Activated CD4-positive, alpha-beta memory T cell treated with anti-CD3 and anti-CD28 coated beads for 36 hours (primary cell): ENCODE measurements at regions of chr7 and their contacts with region 1.

Region 1: GRCh38 chr7:37342688-37343471 is 105.8 kb downstream of the ELMO1 start:
- DNase-seq: peak; percentile 85
- H3K4me3 Mint-ChIP-seq: peak overlapping the region; percentile 96
- H3K27ac Mint-ChIP-seq: peak overlapping the region; percentile 94
- H3K4me1 Mint-ChIP-seq: peaks cover 79% of the 10 kb centered on the region
- H3K27me3 Mint-ChIP-seq: no peaks in the 10 kb centered on the region

Region 2: GRCh38 chr7:36389371-36390198 is 953.3 kb before region 1 on chr7 and contains the start of gene ANLN:
- CTCF ChIA-PET with region 1: no interaction called
- POLR2A ChIA-PET with region 1: no interaction called
- intact Hi-C with region 1: loop called (anchors 2 kb)
- DNase-seq: peak; percentile 91
- H3K4me3 Mint-ChIP-seq: peak within 1 kb of the TSS; percentile 93
- H3K27ac Mint-ChIP-seq: peak within 1 kb of the TSS; percentile 88
- H3K4me1 Mint-ChIP-seq: peaks cover 24% of the 10 kb centered on the region
- H3K27me3 Mint-ChIP-seq: no peaks in the 10 kb centered on the region
- total RNA-seq, gene ANLN: 46.6 to 54.7 TPM

Region 3: DNA sequence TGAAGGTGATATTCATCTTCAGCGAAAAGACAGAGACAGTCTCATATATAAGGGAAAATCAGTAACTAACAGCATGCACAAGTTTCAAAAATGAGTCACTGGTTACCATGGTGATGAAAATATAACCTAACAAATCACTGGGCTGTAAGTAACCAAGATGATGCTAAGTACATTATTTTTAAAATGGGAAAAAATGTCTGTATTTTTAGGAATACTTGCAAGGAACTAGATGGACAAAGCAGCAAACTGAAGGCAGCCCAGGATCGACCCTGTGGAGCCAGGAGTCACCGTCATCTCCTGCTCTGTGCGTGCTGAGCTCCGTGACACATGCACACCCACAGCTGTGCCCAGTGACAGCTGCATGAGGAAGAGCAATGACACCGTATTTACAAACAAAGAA is 31.5 kb before region 1 on chr7:
- CTCF ChIA-PET with region 1: no interaction called
- POLR2A ChIA-PET with region 1: interaction called, 3 read pairs
- intact Hi-C with region 1: loop called (anchors 2 kb)
- DNase-seq: peak; percentile 62
- H3K4me3 Mint-ChIP-seq: peak overlapping the region; percentile 1
- H3K27ac Mint-ChIP-seq: peak overlapping the region; percentile 70
- H3K4me1 Mint-ChIP-seq: peaks cover 65% of the 10 kb centered on the region
- H3K27me3 Mint-ChIP-seq: no peaks in the 10 kb centered on the region

Region 4: GRCh38 chr7:37376386-37376785 is 33.5 kb after region 1 on chr7:
- CTCF ChIA-PET with region 1: interaction called, 3 read pairs
- POLR2A ChIA-PET with region 1: no interaction called
- intact Hi-C with region 1: loop called (anchors 1 kb)
- DNase-seq: peak; percentile 80
- H3K4me3 Mint-ChIP-seq: peak overlapping the region; percentile 54
- H3K27ac Mint-ChIP-seq: peak overlapping the region; percentile 95
- H3K4me1 Mint-ChIP-seq: peaks cover 72% of the 10 kb centered on the region
- H3K27me3 Mint-ChIP-seq: no peaks in the 10 kb centered on the region

Region 5: GRCh38 chr7:37395618-37396259 is 52.9 kb after region 1 on chr7:
- CTCF ChIA-PET with region 1: no interaction called
- POLR2A ChIA-PET with region 1: no interaction called
- intact Hi-C with region 1: no loop called
- DNase-seq: no peak
- H3K4me3 Mint-ChIP-seq: no peak overlapping the region
- H3K27ac Mint-ChIP-seq: peak overlapping the region; percentile 85
- H3K4me1 Mint-ChIP-seq: peaks cover 78% of the 10 kb centered on the region
- H3K27me3 Mint-ChIP-seq: no peaks in the 10 kb centered on the region

Region 6: DNA sequence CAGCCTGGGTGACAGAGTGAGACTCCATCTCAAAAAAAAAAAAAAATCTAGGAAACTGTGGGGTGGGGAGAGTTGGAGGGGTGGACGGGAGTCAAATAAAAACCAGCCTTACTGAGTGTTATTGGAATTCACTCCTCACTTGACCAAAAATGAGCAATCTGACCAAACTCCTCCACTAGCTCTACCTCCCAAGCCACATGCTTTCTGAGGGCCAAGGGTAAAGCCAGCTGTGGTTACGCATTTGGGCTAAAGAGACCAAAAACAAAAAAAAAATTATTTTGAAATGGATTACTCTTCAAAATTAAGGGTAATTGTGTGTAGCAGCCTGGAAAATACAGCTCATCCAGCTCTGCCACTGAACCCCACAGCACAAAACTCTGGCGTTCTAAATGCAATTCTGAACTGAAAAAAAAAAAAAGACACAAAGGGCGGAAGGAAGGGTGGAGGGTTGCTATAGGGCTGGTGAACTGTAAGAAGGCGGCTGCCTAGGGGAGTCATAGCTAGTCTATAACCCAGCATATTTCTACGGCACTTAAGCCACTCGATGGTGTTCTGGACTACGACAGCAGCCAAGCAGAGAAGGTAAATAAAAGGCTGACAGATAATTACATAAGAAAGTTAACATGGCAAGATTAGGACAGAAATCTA is 98.0 kb after region 1 on chr7:
- CTCF ChIA-PET with region 1: interaction called, 4 read pairs
- POLR2A ChIA-PET with region 1: interaction called, 6 read pairs
- intact Hi-C with region 1: loop called (anchors 1 kb)
- DNase-seq: peak; percentile 60
- H3K4me3 Mint-ChIP-seq: peak overlapping the region; percentile 45
- H3K27ac Mint-ChIP-seq: peak overlapping the region; percentile 91
- H3K4me1 Mint-ChIP-seq: peaks cover 89% of the 10 kb centered on the region
- H3K27me3 Mint-ChIP-seq: no peaks in the 10 kb centered on the region